ENCODE measurements at regions of chr6 and their contacts with region 1.

Region 1: DNA sequence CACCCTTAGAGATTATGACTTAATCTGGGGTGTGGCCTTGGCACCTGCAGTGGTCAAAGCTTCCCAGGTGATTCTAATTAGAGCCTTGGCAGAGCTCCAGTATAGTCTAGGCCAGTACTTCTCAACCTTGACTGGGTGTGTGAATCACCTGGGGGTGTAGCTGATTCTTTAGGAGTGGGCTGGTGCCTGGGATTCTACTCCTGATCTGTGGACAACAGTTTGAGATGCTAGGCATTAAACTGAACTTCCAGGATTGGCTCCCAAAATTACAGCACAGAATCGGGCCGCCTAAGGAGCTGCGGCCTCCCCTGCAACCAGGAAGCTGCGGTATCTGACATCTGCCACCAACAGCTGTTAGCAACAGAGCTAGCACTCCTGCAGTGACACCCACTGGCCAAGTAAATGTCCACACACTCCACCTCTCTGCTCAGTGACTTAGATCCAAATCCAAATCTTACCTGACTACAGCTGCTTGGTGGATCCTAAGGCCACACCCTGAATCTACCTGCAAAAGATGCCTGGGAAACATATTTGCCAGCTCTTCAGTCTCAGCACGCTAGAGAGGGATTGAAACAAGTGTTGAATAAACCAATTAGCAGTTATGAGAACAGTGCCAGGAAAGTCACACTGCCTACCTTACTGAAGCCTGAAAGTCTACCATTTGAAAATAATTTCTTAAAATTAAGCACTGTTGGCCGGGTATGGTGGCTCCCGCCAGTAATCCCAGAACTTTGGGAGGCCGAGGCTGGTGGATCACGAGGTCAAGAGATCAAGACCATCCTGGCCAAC is 126.7 kb downstream of the UNC5CL start:
- DNase-seq: peak in 3 of 9 experiments; percentile 3 to 48 (median 38)
- ATAC-seq: no peak
- H3K4me3 ChIP-seq: no peak overlapping the region
- H3K4me3 Mint-ChIP-seq: no peak overlapping the region
- H3K27ac ChIP-seq: no peak overlapping the region
- H3K27ac Mint-ChIP-seq: no peak overlapping the region
- H3K4me1 ChIP-seq: no peaks in the 10 kb centered on the region
- H3K4me1 Mint-ChIP-seq: no peaks in the 10 kb centered on the region
- H3K27me3 ChIP-seq: no peaks in the 10 kb centered on the region
- H3K27me3 Mint-ChIP-seq: peaks cover 5% of the 10 kb centered on the region
- CTCF ChIP-seq: no peak

Region 2: DNA sequence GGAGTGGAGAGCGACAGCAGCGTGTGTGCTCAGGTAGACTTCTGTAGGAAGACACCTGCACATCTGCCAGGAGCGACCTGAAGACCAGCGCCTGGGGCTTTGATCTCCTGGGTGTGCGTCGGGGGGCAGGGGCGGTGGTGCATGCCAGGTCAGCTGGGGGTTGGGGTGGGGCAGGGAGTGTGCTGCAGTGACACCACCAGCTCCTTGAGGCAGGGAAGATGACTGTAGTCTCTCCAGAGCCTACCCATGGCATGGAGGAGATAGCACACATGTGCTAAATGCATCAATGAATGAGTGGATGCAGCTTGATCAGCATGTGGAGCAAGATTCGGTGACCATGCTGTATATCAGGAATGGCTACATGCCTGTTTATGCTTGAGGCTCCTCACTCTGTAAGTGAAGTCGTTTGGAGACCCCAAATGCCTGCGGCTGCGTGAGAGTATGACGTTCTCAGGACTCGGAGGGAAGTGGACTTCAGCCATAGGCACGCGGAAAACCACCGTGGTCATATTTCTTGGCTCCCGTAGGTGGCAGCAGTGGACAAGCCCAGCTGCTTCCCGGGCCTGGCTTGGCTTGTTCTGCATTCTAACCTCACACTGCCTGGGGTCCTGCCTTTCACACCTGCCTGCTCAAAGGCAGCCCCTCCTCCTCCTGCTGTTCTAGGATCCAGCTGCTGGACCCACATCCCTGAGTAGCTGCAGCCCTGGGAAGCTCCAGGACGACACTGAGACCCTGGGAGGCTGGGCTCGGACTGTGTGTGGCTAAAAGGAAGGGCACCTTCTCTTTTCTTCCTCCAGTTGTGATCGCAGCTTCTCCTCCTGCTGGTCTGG is 1550.5 kb before region 1 on chr6:
- CTCF ChIA-PET with region 1: no interaction called
- POLR2A ChIA-PET with region 1: no interaction called
- intact Hi-C with region 1: loop called in 1 of 2 experiments (anchors 5 kb)
- DNase-seq: peak in 7 of 9 experiments; percentile 14 to 58 (median 36)
- ATAC-seq: peak; percentile 36
- H3K4me3 ChIP-seq: no peak overlapping the region
- H3K4me3 Mint-ChIP-seq: no peak overlapping the region
- H3K27ac ChIP-seq: no peak overlapping the region
- H3K27ac Mint-ChIP-seq: no peak overlapping the region
- H3K4me1 ChIP-seq: peaks cover 3% of the 10 kb centered on the region
- H3K4me1 Mint-ChIP-seq: peaks cover 2% of the 10 kb centered on the region
- H3K27me3 ChIP-seq: no peaks in the 10 kb centered on the region
- H3K27me3 Mint-ChIP-seq: peaks cover 10% of the 10 kb centered on the region
- CTCF ChIP-seq: peak; percentile 47

Region 3: GRCh38 chr6:39952167-39952566 is 960.2 kb before region 1 on chr6:
- CTCF ChIA-PET with region 1: no interaction called
- POLR2A ChIA-PET with region 1: no interaction called
- intact Hi-C with region 1: no loop called
- DNase-seq: no peak
- ATAC-seq: no peak
- H3K4me3 ChIP-seq: no peak overlapping the region
- H3K4me3 Mint-ChIP-seq: no peak overlapping the region
- H3K27ac ChIP-seq: no peak overlapping the region
- H3K27ac Mint-ChIP-seq: no peak overlapping the region
- H3K4me1 ChIP-seq: no peaks in the 10 kb centered on the region
- H3K4me1 Mint-ChIP-seq: no peaks in the 10 kb centered on the region
- H3K27me3 ChIP-seq: no peaks in the 10 kb centered on the region
- H3K27me3 Mint-ChIP-seq: peaks cover 5% of the 10 kb centered on the region
- CTCF ChIP-seq: no peak

Region 4: DNA sequence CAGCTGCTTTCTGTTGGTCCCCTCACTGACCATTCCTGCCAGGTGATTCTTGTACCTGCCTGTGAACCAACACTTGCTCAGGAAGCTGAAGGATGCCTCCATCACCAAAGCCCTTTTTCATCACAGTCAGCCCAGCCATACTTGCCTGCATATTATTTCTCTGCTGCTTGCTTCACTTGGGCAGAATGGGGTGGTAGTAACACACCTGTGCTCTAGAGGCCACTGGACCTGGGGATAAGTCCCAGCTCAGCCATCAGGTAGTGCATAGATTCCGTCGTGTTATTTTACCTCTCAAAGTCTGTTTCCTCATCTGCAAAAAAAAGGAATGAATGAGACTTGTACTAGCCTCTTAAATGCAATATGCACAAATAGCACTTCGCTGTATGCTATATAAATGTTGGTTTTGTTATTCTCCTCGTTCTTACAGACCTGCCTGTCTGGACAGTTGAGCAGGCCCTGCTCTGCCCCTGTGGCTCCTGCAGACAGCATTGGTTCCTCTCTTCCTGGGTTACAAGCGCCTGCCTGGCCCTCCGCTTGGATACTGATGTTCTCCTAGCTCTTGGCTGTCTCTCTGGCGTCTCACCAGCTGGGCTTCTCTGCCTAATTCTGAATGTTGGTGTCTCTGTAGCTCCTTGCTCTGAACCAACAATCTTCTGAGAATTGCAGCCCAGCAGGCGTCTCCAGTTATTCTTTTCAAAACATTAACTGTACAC is 25.1 kb before region 1 on chr6:
- CTCF ChIA-PET with region 1: no interaction called
- POLR2A ChIA-PET with region 1: no interaction called
- intact Hi-C with region 1: no loop called
- DNase-seq: no peak
- ATAC-seq: no peak
- H3K4me3 ChIP-seq: no peak overlapping the region
- H3K4me3 Mint-ChIP-seq: no peak overlapping the region
- H3K27ac ChIP-seq: no peak overlapping the region
- H3K27ac Mint-ChIP-seq: no peak overlapping the region
- H3K4me1 ChIP-seq: no peaks in the 10 kb centered on the region
- H3K4me1 Mint-ChIP-seq: no peaks in the 10 kb centered on the region
- H3K27me3 ChIP-seq: no peaks in the 10 kb centered on the region
- H3K27me3 Mint-ChIP-seq: peaks cover 12% of the 10 kb centered on the region
- CTCF ChIP-seq: no peak

Region 5: GRCh38 chr6:41859356-41859755 is 947.0 kb after region 1 on chr6:
- CTCF ChIA-PET with region 1: no interaction called
- POLR2A ChIA-PET with region 1: no interaction called
- intact Hi-C with region 1: no loop called
- DNase-seq: no peak
- ATAC-seq: no peak
- H3K4me3 ChIP-seq: no peak overlapping the region
- H3K4me3 Mint-ChIP-seq: no peak overlapping the region
- H3K27ac ChIP-seq: no peak overlapping the region
- H3K27ac Mint-ChIP-seq: no peak overlapping the region
- H3K4me1 ChIP-seq: no peaks in the 10 kb centered on the region
- H3K4me1 Mint-ChIP-seq: no peaks in the 10 kb centered on the region
- H3K27me3 ChIP-seq: no peaks in the 10 kb centered on the region
- H3K27me3 Mint-ChIP-seq: no peaks in the 10 kb centered on the region
- CTCF ChIP-seq: no peak